Activated B cell treated with CpG ODN at 0.5 μM for 24 hours (primary cell): ENCODE measurements at regions of chr5 and their contacts with region 1.

Region 1: DNA sequence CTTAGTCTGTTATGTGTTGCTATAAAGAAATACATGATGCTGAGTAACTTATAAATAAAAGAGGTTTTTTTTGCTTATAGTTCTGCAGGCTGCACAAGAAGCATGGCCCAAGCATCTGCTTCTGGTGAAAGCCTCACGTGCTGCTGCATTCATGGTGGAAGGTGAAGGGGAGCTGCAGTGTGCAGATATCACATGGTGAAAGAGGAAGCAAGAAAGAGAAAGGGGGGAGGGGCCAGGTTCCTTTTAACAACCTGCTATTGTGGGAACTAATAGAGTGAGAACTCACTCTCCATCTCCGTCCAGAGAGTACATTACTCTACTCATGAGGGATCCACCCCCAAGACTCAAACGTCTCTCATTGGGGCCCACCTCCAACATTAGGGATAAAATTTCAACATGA is 12.5 kb upstream of the PARP8 start:
- DNase-seq: peak; percentile 17
- ATAC-seq: peak; percentile 98
- H3K4me3 Mint-ChIP-seq: peak overlapping the region; percentile 49
- H3K27ac Mint-ChIP-seq: peak overlapping the region; percentile 81
- H3K4me1 Mint-ChIP-seq: peaks cover 28% of the 10 kb centered on the region
- H3K27me3 Mint-ChIP-seq: no peaks in the 10 kb centered on the region
- CTCF ChIP-seq: no peak

Region 2: DNA sequence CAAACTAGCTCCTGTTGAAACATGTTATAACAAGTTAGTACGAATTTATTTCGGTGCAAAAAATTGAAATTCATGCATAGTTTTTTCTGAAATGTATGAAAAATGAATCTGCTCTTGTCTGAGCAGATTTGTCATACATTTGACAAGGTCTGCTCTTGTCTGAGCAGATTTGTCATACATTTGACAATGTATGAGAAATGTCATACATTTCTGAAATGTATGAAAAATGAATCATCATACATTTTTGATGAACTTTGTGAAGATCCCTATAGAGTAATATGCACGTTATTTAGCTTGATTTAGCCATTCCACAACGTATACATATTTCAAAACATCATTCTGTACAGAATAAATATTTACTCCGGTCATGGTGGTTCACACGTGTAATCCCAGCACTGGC is 73.4 kb before region 1 on chr5:
- CTCF ChIA-PET with region 1: no interaction called
- POLR2A ChIA-PET with region 1: interaction called, 10 read pairs
- intact Hi-C with region 1: no loop called
- DNase-seq: no peak
- ATAC-seq: no peak
- H3K4me3 Mint-ChIP-seq: no peak overlapping the region
- H3K27ac Mint-ChIP-seq: no peak overlapping the region
- H3K4me1 Mint-ChIP-seq: peaks cover 4% of the 10 kb centered on the region
- H3K27me3 Mint-ChIP-seq: no peaks in the 10 kb centered on the region
- CTCF ChIP-seq: no peak

Region 3: GRCh38 chr5:50922942-50923767 is 269.2 kb after region 1 on chr5:
- CTCF ChIA-PET with region 1: no interaction called
- POLR2A ChIA-PET with region 1: no interaction called
- intact Hi-C with region 1: no loop called
- DNase-seq: no peak
- ATAC-seq: no peak
- H3K4me3 Mint-ChIP-seq: no peak overlapping the region
- H3K27ac Mint-ChIP-seq: no peak overlapping the region
- H3K4me1 Mint-ChIP-seq: no peaks in the 10 kb centered on the region
- H3K27me3 Mint-ChIP-seq: peaks cover 7% of the 10 kb centered on the region
- CTCF ChIP-seq: no peak